Esophagus muscularis mucosa (tissue), 4 donors: ENCODE measurements at regions of chr7 and their contacts with region 1.

Region 1: GRCh38 chr7:139133335-139134139 is 24.0 kb upstream of the ZC3HAV1 start:
- DNase-seq: peak; percentile 93
- H3K4me3 ChIP-seq: peak overlapping the region; percentile 47 to 76 (median 62)
- H3K27ac ChIP-seq: peak overlapping the region; percentile 58 to 72 (median 70)
- H3K4me1 ChIP-seq: peaks cover 8 to 18% (median 16%) of the 10 kb centered on the region in 4 donors
- H3K27me3 ChIP-seq: no peaks in the 10 kb centered on the region
- CTCF ChIP-seq: peak in 1 of 3 experiments; percentile 22
- EP300 ChIP-seq: no peak
- POLR2A ChIP-seq: no peak

Region 2: GRCh38 chr7:137882261-137882668 is 1251.3 kb before region 1 on chr7:
- intact Hi-C with region 1: loop called (anchors 10 kb)
- DNase-seq: no peak
- H3K4me3 ChIP-seq: no peak overlapping the region
- H3K27ac ChIP-seq: peak overlapping the region; percentile 1 to 62 (median 48)
- H3K4me1 ChIP-seq: peaks cover 26 to 62% (median 51%) of the 10 kb centered on the region in 4 donors
- H3K27me3 ChIP-seq: no peaks in the 10 kb centered on the region
- CTCF ChIP-seq: no peak
- EP300 ChIP-seq: no peak
- POLR2A ChIP-seq: no peak

Region 3: DNA sequence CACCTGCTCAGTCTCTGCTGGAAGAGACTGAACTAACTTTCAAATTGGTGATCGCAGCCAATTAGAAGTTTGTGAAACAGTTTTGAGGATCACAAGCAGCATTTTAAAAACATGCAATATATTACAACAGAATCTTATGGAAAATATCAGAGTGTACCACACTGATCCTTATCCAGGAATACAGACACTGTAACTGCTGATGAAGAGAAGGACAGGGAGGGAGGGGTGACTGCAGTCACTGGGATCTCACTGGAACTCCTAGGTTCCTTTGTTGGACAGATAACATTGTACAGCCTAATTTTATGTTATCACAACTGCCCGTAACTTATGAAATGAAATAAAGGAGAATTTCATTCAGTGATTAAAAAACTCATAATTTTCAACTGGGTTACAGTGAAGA is 90.7 kb after region 1 on chr7:
- intact Hi-C with region 1: loop called (anchors 10 kb)
- DNase-seq: no peak
- H3K4me3 ChIP-seq: no peak overlapping the region
- H3K27ac ChIP-seq: no peak overlapping the region
- H3K4me1 ChIP-seq: no peaks in the 10 kb centered on the region
- H3K27me3 ChIP-seq: no peaks in the 10 kb centered on the region
- CTCF ChIP-seq: no peak
- EP300 ChIP-seq: no peak
- POLR2A ChIP-seq: no peak